ENCODE measurements at regions of chr5 and their contacts with region 1.

Region 1: DNA sequence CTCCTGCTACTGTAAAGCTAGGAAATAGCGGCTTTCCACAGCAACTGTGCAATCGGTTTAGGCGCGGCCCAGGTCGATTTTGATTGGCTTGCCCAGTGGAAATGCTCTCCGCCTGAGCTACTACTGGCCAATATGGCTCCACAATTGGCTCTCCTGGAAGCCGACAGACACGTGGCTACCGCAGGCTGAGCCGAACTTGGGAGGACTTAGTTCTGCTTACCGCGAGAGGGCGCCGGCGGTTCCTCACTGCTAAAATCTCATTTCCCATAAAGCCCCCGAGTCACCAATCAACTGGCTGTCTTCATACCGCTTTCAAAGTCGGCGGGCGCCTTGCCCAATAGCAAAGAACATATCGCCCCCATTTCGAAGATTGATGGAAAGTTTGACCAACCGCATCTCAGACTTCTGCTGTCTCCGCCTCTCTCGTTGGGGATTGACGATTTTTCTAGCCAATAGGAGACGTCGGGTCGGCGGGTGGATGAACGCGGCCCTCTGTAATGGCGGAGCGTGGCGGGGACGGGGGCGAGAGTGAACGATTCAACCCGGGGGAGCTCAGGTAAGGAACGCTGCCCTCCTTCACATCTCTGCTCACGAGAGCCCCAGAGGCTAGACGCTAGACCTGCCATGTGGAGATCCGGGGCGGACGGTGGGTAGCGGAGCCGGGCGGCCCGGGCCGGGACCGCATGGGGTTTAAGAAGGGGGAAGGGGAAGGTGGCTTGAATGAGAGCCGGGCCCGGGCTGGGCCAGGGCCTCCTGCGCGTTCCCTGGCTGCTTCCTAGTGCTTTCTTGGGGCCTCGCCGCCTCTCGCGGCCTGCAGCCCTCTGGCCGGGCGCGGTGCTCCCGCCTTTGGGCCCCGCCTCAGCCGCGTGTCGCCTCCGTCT is at the start of gene TCERG1:
- DNase-seq: peak; percentile 99
- H3K4me3 ChIP-seq: peak within 1 kb of the TSS; percentile 79 to 94
- H3K4me3 Mint-ChIP-seq: peak within 1 kb of the TSS; percentile 97 to 100 (median 99)
- H3K27ac ChIP-seq: peak within 1 kb of the TSS; percentile 88
- H3K27ac Mint-ChIP-seq: peak within 1 kb of the TSS; percentile 97 to 100 (median 99)
- H3K4me1 ChIP-seq: peaks cover 38% of the 10 kb centered on the region
- H3K4me1 Mint-ChIP-seq: peaks cover 29 to 49% (median 39%) of the 10 kb centered on the region in 4 donors
- H3K27me3 ChIP-seq: no peaks in the 10 kb centered on the region
- H3K27me3 Mint-ChIP-seq: no peaks in the 10 kb centered on the region
- total RNA-seq, gene TCERG1: 67.9 to 68.5 TPM

Region 2: GRCh38 chr5:146466521-146467349 is 19.6 kb after region 1 on chr5:
- CTCF ChIA-PET with region 1: interaction called, 14 read pairs
- POLR2A ChIA-PET with region 1: interaction called, 3 read pairs
- intact Hi-C with region 1: no loop called
- DNase-seq: no peak
- H3K4me3 ChIP-seq: no peak overlapping the region
- H3K4me3 Mint-ChIP-seq: no peak overlapping the region
- H3K27ac ChIP-seq: no peak overlapping the region
- H3K27ac Mint-ChIP-seq: peak overlapping the region in 3 of 7 donors; percentile 32 to 36 (median 33)
- H3K4me1 ChIP-seq: peaks cover 4% of the 10 kb centered on the region
- H3K4me1 Mint-ChIP-seq: peaks cover 11 to 27% (median 22%) of the 10 kb centered on the region in 4 donors
- H3K27me3 ChIP-seq: no peaks in the 10 kb centered on the region
- H3K27me3 Mint-ChIP-seq: no peaks in the 10 kb centered on the region

Region 3: GRCh38 chr5:148383564-148384379 is 1936.7 kb after region 1 on chr5 and contains the start of gene FBXO38:
- CTCF ChIA-PET with region 1: no interaction called
- POLR2A ChIA-PET with region 1: no interaction called
- intact Hi-C with region 1: loop called (anchors 2 kb)
- DNase-seq: peak; percentile 97 to 99 (median 97)
- H3K4me3 ChIP-seq: peak within 1 kb of the TSS; percentile 82 to 86
- H3K4me3 Mint-ChIP-seq: peak within 1 kb of the TSS; percentile 86 to 97 (median 92)
- H3K27ac ChIP-seq: peak within 1 kb of the TSS; percentile 93
- H3K27ac Mint-ChIP-seq: peak within 1 kb of the TSS; percentile 90 to 100 (median 99)
- H3K4me1 ChIP-seq: peaks cover 47% of the 10 kb centered on the region
- H3K4me1 Mint-ChIP-seq: peaks cover 42 to 71% (median 59%) of the 10 kb centered on the region in 4 donors
- H3K27me3 ChIP-seq: no peaks in the 10 kb centered on the region
- H3K27me3 Mint-ChIP-seq: no peaks in the 10 kb centered on the region
- total RNA-seq, gene FBXO38: 77.3 to 78.3 TPM